Gastrocnemius medialis (tissue), 4 donors: ENCODE measurements at regions of chr10 and their contacts with region 1.

Region 1: DNA sequence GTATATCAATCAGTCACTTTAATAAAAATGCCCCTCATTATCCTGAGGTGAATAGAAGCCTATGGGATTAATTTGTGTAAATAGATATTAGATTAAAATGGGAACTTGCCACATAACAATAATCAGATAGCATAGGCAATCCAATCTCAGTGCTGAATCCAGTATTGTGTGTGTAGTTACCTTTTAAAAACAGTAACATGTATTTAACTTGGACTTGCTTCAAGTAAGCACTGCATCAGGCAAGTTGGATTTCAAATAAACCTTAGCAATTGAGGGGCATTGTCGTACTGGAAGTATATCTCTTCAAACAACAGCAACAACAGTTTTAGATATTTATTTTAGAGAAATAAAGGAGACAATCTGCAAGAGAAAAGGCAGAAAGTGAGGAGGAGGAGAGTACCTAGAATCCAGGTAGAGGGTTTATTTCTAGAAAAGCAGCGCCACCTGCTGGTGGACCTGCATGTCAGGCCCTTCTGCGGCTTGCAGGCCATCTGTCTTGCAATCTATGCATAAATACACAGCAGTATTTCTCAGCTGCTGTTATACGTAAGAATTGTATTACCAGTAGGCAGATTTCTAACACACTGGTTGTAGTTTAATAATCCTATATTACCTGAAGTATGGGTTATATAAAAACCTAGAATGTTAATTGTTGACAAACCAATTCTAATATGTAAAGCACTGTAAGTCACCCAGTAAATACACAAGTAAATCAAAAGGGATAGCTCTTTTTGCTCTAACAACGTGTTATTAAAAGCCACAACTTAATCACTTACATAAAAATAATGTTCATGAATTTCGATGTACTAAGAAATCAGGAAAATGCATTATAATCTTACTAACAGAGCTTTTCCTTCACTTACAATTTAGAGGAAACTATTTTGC is 652.8 kb downstream of the KCNMA1 start:
- DNase-seq: peak; percentile 46 to 51
- ATAC-seq: peak; percentile 76 to 81
- H3K4me3 ChIP-seq: no peak overlapping the region
- H3K27ac ChIP-seq: no peak overlapping the region
- H3K4me1 ChIP-seq: peaks cover 0 to 5% of the 10 kb centered on the region in 2 donors
- H3K27me3 ChIP-seq: no peaks in the 10 kb centered on the region
- CTCF ChIP-seq: peak; percentile 68 to 89 (median 81)
- POLR2A ChIP-seq: no peak

Region 2: DNA sequence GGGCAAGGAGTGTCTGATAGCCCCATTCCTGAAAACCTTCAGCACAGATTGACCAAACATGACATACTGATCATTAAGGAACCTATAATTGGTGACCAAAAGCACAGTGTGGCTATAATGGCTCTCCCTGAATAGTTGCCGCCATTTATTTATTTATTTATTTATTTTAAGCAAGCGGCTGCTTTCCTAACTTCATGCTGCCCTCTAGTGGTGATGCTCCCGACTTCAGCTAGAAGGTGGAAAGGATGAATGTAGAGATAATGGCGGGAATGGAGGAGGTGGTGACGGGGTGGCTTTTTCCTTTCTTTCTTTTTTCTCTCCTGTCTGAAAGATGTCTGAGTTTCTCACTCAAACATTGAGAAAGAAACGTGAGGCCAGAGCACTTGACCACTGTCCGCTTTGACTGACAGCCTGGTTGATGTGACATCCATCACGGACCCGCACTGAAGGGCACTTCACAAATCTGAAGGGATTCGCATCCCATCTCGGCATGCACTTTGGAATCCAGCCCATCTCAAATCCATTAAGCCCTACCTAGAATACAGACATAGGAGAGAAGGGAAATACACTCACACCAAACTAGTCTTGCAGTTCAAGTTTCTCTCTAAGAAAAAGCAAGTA is 437.3 kb before region 1 on chr10:
- in situ Hi-C with region 1: loop called in 1 of 4 experiments (anchors 25 kb)
- intact Hi-C with region 1: loop called (anchors 5 kb)
- DNase-seq: peak; percentile 59 to 69
- ATAC-seq: peak; percentile 56 to 91
- H3K4me3 ChIP-seq: no peak overlapping the region
- H3K27ac ChIP-seq: no peak overlapping the region
- H3K4me1 ChIP-seq: no peaks in the 10 kb centered on the region
- H3K27me3 ChIP-seq: no peaks in the 10 kb centered on the region
- CTCF ChIP-seq: peak; percentile 40 to 81 (median 70)
- POLR2A ChIP-seq: no peak

Region 3: DNA sequence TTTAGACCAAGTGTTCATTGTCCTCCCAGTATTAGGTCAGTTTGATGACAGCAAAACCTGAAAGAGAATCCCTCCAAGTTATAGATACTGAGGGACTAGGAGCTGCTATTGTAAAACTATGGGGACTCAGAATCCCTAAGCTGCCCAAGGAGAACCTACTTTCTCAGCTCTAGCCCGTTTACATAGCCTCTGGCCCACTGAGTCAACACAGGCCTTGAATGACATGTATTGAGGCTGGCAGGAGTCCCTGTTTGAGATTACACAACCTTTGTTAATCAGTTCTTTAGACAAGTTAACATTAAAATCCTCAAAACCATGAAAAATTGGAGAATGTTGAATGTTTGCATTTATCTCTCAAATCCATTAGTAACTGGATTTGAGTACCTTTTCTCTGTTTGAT is 426.2 kb before region 1 on chr10:
- in situ Hi-C with region 1: loop called in 1 of 4 experiments (anchors 25 kb)
- intact Hi-C with region 1: no loop called
- DNase-seq: peak in 1 of 2 donors; percentile 19
- ATAC-seq: no peak
- H3K4me3 ChIP-seq: no peak overlapping the region
- H3K27ac ChIP-seq: no peak overlapping the region
- H3K4me1 ChIP-seq: peaks cover 0 to 4% of the 10 kb centered on the region in 2 donors
- H3K27me3 ChIP-seq: no peaks in the 10 kb centered on the region
- CTCF ChIP-seq: no peak
- POLR2A ChIP-seq: no peak

Region 4: DNA sequence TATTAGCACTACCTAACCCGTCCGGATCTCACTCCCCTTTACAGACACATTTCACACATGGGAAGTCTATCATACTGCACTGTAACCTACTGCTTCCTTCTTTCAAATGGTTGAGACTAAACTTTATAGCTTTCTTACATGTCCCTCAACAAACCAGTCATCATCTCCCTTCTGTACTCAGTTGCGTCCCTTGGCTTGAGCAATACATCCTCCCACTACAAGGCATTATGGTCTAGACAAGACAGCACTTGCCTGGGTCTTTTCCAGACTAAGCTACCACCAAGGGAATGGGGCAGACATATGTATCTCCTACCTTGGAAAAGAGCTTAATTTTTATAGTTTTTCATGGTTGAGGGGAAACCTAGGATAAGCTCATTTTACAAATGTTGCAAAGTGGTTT is 77.6 kb after region 1 on chr10:
- in situ Hi-C with region 1: no loop called
- intact Hi-C with region 1: no loop called
- DNase-seq: no peak
- ATAC-seq: no peak
- H3K4me3 ChIP-seq: no peak overlapping the region
- H3K27ac ChIP-seq: no peak overlapping the region
- H3K4me1 ChIP-seq: no peaks in the 10 kb centered on the region
- H3K27me3 ChIP-seq: no peaks in the 10 kb centered on the region
- CTCF ChIP-seq: no peak
- POLR2A ChIP-seq: no peak